Adrenal gland (tissue), 19 donors: ENCODE measurements at regions of chr5 and their contacts with region 1.

Region 1: GRCh38 chr5:168513861-168514428 is 15.2 kb upstream of the FBLL1 start:
- DNase-seq: no peak
- H3K4me3 ChIP-seq: no peak overlapping the region
- H3K27ac ChIP-seq: no peak overlapping the region
- H3K4me1 ChIP-seq: no peaks in the 10 kb centered on the region
- H3K27me3 ChIP-seq: no peaks in the 10 kb centered on the region
- CTCF ChIP-seq: no peak
- POLR2A ChIP-seq: no peak

Region 2: DNA sequence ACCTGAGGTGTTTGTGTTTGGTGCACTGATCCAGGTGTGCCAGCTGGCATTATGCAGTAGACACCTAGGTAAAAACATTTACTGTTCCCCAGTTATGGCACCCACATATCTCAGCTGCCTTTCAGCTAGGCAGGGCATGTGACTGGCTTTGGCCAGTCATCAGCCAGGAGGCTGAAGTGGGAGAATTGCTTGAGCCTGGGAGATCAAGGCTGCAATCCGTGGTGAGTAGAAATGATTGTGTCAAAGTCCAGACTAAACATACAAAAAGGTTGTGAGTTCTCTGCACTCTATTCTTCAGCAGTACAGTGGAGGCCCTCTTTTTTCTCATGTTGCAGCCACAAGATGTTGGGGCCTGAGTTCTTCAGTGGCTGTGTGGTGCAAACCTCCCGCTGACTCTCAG is 11.9 kb after region 1 on chr5:
- intact Hi-C with region 1: loop called in 1 of 2 experiments (anchors 2 kb)
- DNase-seq: no peak
- H3K4me3 ChIP-seq: no peak overlapping the region
- H3K27ac ChIP-seq: no peak overlapping the region
- H3K4me1 ChIP-seq: peaks cover 0 to 5% of the 10 kb centered on the region in 2 donors
- H3K27me3 ChIP-seq: no peaks in the 10 kb centered on the region
- CTCF ChIP-seq: no peak
- POLR2A ChIP-seq: no peak